Calu3 (cell line): ENCODE measurements at regions of chr7 and their contacts with region 1.

Region 1: DNA sequence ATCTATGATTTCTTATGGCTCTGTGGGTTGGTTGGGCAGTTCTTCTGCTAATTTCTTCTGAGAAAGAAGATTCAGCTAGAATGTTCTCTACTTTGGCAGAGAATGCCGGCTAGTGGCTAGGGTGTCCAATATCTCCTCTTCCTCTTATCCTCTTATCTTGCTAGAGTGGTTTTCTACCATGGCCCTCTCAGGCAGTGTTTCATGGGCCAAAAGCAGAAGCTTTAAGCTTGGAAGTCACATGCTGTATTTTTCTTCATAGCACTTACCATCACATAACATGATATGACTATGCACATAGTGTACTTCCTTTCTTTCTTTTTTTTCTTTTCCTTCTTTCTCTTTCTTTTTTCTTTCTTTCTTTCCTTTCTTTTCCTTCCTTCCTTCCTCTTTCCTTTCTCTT is 140.0 kb downstream of the ITGB8 start:
- DNase-seq: no peak
- H3K4me3 Mint-ChIP-seq: no peak overlapping the region
- H3K27ac Mint-ChIP-seq: no peak overlapping the region
- H3K4me1 Mint-ChIP-seq: no peaks in the 10 kb centered on the region
- H3K27me3 Mint-ChIP-seq: no peaks in the 10 kb centered on the region
- CTCF ChIP-seq: no peak

Region 2: DNA sequence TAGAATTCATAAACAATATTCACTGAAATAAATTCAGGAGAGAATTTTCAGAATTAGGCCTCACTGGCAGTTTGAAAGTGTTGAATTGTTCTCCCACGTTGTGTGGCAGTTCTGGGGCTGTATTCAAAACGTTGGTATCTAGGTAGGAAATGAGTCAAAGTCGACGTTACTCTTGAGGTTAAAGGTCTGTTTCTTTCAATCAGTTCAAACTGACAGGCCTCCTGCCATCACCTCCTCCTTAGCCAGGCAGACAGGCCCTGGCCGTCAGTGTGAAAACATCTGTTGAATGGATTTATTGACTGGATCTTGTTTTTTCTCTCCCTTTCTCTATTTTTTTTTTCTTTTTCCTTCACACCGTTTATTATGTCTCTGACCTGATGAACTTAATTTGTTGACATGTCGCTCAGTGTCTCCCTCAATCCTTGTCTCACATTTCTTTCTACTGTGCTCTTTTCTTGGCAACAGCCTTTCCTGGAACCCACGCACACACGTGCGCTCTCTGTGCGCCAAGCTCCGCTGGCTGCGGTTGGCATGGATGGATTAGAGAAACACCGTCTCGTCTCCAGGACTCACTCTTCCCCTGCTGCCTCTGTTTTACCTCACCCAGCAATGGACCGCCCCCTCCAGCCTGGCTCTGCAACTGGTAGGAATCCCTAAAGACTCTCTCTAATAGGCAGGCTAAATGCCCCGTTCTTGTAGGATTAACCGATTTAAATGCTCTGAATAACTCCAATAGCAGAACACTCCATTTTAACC is 1743.4 kb before region 1 on chr7:
- CTCF ChIA-PET with region 1: no interaction called
- intact Hi-C with region 1: loop called (anchors 10 kb)
- DNase-seq: no peak
- H3K4me3 Mint-ChIP-seq: no peak overlapping the region
- H3K27ac Mint-ChIP-seq: no peak overlapping the region
- H3K4me1 Mint-ChIP-seq: peaks cover 8% of the 10 kb centered on the region
- H3K27me3 Mint-ChIP-seq: no peaks in the 10 kb centered on the region
- CTCF ChIP-seq: no peak

Region 3: DNA sequence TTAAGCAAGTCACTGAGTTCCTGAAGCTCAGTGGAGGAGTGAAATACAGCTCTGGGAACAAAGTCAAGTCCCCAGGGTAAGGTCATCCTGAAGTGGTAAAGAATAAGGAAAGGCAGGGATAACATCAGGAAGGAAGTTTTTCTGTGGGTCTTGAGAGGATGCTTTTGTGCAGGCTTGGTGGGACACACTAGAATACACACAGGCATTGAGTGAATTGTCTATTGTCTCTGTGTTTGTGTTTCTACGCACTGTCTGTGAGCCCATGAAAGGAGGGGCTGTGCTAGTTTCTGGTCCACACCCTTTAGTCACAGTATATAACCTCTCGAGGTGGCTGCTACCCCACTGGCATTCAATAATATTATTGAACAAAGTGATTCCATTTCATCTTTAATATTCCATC is 48.9 kb after region 1 on chr7:
- CTCF ChIA-PET with region 1: no interaction called
- intact Hi-C with region 1: no loop called
- DNase-seq: no peak
- H3K4me3 Mint-ChIP-seq: no peak overlapping the region
- H3K27ac Mint-ChIP-seq: no peak overlapping the region
- H3K4me1 Mint-ChIP-seq: no peaks in the 10 kb centered on the region
- H3K27me3 Mint-ChIP-seq: no peaks in the 10 kb centered on the region
- CTCF ChIP-seq: no peak